ENCODE measurements at regions of chr3 and their contacts with region 1.

Region 1: DNA sequence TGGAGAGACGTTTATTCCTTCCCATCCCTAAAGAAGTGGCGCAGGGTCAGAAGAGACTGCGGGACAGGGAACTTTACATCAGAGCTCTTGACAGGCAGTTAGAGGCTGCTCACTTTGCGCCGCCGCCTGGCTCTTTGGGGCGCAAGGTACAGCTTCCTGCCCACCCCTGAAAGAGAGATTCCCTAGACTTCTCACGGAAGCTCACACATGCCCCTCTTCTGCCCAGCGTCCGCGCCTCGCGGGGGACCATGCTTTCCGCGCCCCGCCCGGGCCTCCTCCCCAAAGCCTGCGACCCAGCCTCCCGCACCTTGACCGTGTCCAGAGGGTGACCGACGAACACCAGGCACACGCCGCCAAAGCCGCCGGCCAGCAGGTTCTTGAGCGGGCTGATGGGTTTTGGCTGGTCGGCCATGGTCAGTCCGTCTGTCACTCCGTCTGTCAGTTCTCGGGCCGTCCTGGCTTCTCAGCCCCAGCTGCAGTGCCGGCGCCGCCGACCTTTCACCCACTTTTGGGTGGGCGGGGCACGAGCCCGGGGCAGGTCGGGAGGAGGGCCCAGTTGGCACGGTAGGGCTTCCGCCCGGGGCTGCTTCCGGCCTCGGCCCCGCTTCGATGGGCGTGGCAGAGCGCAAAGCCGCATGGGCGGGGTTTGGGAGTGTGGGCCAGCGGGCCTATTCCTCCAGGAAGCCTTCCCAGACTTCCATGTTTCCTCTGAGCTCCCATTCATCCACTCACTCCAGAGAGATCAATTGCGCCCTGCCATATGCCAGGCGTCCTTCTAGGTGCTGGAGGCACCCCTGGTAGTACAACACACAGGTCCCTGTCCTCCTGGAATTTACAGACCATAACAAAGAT is at the start of gene SLC25A20:
- DNase-seq: peak; percentile 95
- ATAC-seq: peak; percentile 97
- H3K4me3 Mint-ChIP-seq: peak within 1 kb of the TSS; percentile 79
- H3K27ac Mint-ChIP-seq: peak within 1 kb of the TSS; percentile 96
- H3K4me1 Mint-ChIP-seq: peaks cover 32% of the 10 kb centered on the region
- H3K27me3 Mint-ChIP-seq: no peaks in the 10 kb centered on the region
- CTCF ChIP-seq: no peak
- total RNA-seq, gene SLC25A20: 14.8 to 16.8 TPM

Region 2: DNA sequence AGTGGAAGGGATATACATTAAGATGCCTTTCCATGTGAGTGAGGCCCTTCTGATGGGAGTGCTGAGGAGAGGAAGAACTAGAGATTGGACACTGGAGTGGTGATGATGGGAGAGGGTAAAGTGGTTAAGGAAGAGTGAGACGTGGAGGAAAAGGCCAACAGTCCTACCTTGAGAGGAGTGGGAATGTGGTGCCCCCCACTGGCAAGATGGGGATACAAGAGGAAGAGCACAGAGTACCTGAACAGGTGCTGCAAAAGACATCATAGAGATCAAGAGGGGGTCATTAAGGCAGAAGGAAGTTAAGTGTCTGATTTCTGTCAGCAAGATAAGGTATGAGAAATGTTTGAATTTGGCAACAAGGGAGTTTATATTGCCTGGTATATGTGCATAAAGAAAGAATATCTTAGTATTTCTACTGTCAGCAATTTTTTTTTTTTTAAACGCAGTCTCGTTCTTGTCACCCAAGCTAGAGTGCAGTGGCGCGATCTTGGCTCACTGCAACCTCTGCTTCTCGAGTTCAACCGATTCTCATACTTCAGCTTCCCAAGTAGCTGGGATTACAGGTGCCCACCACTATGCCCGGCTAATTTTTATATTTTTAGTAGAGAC is 54.0 kb after region 1 on chr3:
- CTCF ChIA-PET with region 1: interaction called, 11 read pairs
- POLR2A ChIA-PET with region 1: no interaction called
- intact Hi-C with region 1: no loop called
- DNase-seq: peak; percentile 69
- ATAC-seq: peak; percentile 49
- H3K4me3 Mint-ChIP-seq: no peak overlapping the region
- H3K27ac Mint-ChIP-seq: peak overlapping the region; percentile 19
- H3K4me1 Mint-ChIP-seq: peaks cover 17% of the 10 kb centered on the region
- H3K27me3 Mint-ChIP-seq: no peaks in the 10 kb centered on the region
- CTCF ChIP-seq: peak; percentile 56

Region 3: DNA sequence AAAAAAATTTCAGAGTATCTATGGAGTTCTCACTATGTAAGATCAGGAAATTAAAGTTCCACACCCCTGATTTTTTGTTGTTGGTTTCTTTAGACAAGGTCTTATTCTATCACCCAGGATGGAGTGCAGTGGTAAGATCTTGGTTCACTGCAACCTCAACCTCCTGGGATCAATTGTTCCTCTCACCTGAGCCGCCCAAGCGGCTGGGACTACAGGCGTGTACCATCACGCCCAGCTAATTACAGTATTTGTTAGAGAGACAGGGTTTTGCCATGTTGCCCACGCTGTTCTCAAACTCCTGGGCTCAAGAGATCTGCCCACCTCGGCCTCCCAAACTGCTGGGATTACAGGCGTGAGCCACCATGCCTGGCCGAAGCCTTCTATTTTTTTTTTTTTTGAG is 182.8 kb after region 1 on chr3:
- CTCF ChIA-PET with region 1: no interaction called
- POLR2A ChIA-PET with region 1: no interaction called
- intact Hi-C with region 1: no loop called
- DNase-seq: no peak
- ATAC-seq: no peak
- H3K4me3 Mint-ChIP-seq: no peak overlapping the region
- H3K27ac Mint-ChIP-seq: no peak overlapping the region
- H3K4me1 Mint-ChIP-seq: peaks cover 20% of the 10 kb centered on the region
- H3K27me3 Mint-ChIP-seq: no peaks in the 10 kb centered on the region
- CTCF ChIP-seq: no peak

Measured in activated CD8-positive, alpha-beta T cell treated with anti-CD3 and anti-CD28 coated beads for 36 hours (primary cell).